ENCODE measurements at regions of chr20 and their contacts with region 1.

Region 1: DNA sequence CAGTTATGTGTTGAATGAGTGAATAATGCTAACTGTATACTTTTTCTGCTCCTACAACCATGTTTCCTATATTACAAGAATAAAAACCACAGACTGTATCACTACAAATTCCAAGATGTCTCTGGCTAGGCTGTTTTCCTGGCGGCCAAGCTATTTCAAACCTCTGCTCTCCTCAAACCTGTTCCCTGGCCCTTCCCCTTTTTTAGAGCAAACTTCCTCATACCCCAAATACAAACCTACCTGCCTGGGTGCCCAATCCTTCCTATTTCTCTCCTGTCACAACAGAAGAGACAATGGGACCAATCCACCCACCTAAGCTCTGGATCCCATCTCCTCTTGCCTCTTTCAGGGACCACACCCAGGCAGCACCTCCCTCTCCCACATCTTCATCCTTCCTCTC is 7.5 kb downstream of the TOMM34 start:
- DNase-seq: no peak
- H3K4me3 ChIP-seq: no peak overlapping the region
- H3K27ac ChIP-seq: no peak overlapping the region
- H3K4me1 ChIP-seq: no peaks in the 10 kb centered on the region
- H3K27me3 ChIP-seq: no peaks in the 10 kb centered on the region

Region 2: DNA sequence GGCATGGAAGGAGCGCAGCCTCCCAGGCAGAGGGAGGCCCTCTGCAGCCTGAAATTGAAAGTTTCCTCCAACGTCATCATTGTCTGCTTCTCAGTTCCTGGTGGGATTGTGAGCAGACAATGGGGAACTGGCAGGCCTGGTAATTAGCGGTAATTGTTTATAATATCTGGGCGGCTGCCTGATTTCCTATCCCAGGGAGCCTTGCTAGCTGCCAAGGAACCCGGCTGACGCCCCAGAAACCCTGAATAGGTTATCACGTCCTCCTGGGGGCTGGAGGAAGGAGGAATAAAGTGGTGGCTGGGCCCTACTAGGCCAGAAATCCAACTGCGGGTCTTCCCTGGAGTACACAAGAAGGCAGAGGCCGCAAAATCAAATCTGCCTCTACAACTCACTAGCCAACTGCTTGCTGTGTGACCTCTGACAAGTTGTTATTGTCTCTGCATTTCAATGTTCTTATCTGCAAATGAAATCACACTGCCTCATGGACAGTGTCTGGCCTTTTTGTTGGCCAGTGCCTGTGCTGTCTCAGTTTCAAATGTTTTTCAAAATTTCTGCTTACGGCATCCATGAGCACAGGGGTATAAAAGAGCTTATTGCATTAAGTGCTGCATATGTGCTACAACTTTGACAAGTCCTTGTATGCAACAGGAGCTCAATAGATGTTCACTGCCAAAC is 190.1 kb before region 1 on chr20:
- CTCF ChIA-PET with region 1: no interaction called
- POLR2A ChIA-PET with region 1: no interaction called
- DNase-seq: no peak
- H3K4me3 ChIP-seq: no peak overlapping the region
- H3K27ac ChIP-seq: no peak overlapping the region
- H3K4me1 ChIP-seq: peaks cover 0 to 8% (median 2%) of the 10 kb centered on the region in 4 experiments
- H3K27me3 ChIP-seq: peaks cover 0 to 18% (median 10%) of the 10 kb centered on the region in 5 experiments

Region 3: DNA sequence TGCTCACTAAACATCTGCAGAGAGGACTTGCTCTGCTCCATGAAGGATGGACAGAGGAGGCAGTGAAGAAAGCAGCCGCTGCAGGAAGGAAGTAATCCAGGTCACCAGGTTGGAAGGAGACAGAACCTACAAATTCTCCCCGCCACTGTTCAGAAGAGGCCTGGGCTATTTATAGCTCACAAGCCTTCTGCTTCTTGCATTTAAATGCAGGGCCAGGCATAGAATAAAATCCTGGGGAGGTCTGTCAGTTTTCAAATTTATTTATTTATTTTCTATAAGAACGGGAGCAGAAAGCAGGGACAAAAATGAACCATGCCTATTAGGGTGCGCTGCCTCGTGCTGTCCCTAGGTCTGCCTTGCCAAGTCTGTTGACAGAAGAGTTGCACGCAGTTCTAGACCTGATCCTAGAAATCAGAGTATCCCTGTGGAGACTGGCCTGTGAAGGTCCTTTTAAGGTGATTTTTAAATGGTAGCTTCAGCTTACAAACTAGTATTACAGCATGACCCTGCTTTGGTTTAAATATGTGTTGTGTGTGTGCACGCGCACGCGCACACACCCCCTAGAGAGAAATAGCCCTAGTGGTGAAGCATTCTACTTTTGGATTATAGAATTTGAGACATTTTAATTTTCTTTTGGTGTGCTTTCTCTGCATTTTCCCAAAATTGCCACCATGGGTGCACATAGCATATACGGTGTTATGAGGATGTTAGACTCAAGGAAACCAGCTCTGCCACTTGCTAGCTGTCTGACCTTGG is 161.9 kb before region 1 on chr20:
- CTCF ChIA-PET with region 1: no interaction called
- POLR2A ChIA-PET with region 1: no interaction called
- DNase-seq: no peak
- H3K4me3 ChIP-seq: no peak overlapping the region
- H3K27ac ChIP-seq: no peak overlapping the region
- H3K4me1 ChIP-seq: no peaks in the 10 kb centered on the region
- H3K27me3 ChIP-seq: peaks cover 0 to 18% (median 11%) of the 10 kb centered on the region in 5 experiments

Region 4: GRCh38 chr20:44942264-44942973 is 10.3 kb before region 1 on chr20:
- CTCF ChIA-PET with region 1: interaction called, 10 read pairs
- POLR2A ChIA-PET with region 1: interaction called, 3 read pairs
- DNase-seq: no peak
- H3K4me3 ChIP-seq: no peak overlapping the region
- H3K27ac ChIP-seq: no peak overlapping the region
- H3K4me1 ChIP-seq: no peaks in the 10 kb centered on the region
- H3K27me3 ChIP-seq: no peaks in the 10 kb centered on the region

Measured in common myeloid progenitor, CD34-positive (primary cell).